Endothelial cell of umbilical vein (primary cell): ENCODE measurements at regions of chr3 and their contacts with region 1.

Region 1: GRCh38 chr3:31132132-31132769 is 237.8 kb upstream of the GADL1 start:
- DNase-seq: peak; percentile 63
- H3K4me3 ChIP-seq: no peak overlapping the region
- H3K27ac ChIP-seq: no peak overlapping the region
- H3K4me1 ChIP-seq: no peaks in the 10 kb centered on the region
- H3K27me3 ChIP-seq: no peaks in the 10 kb centered on the region
- CTCF ChIP-seq: peak; percentile 28 to 38
- POLR2A ChIP-seq: no peak

Region 2: DNA sequence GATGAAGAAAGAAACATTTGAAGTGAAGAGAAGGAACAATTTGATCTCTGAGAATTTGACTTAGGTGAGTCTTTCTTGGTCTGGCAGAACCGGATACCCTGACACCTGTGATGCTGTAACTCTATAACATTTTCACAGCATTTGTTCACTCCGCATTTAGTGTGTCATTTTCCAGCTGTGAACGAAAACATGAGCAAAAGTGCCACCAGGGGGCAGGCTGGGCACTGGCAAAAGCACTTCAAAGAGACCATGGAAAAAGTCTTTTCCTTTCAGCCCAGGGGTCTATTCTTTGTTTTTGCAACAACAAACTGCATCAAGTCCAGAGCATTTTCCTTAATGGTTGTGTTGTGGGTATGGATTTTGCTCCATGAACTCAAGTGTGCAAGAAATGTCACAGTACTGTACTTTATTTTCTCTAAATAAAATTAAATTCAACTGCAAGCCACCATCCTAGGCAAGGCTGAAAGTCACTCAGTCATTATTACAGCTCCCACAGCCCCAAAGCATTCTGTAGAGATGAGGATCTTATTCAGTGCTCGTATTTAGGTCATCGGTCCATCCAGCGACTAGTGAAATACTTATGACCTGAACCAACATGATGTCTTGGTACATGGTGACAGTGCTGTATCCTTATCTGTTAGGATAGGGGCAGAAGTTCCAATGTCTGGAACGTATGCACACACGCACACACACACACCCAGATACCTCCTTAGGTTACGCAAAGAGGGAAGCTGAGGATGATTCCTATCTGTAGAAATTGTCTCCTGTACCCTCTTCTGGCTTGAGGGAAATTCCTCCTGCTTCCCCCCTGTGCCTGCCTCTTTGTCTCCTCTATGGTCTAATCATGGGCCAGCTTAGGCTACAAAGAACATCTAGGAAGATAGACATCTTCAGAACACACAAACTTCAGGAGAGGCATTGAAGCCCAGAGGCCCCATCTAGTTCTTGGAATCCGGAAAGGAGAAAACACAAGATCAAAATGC is 363.3 kb before region 1 on chr3:
- CTCF ChIA-PET with region 1: interaction called, 125 read pairs
- POLR2A ChIA-PET with region 1: no interaction called
- dilution Hi-C with region 1: no loop called
- intact Hi-C with region 1: loop called (anchors 1 kb)
- DNase-seq: peak; percentile 70
- H3K4me3 ChIP-seq: no peak overlapping the region
- H3K27ac ChIP-seq: no peak overlapping the region
- H3K4me1 ChIP-seq: no peaks in the 10 kb centered on the region
- H3K27me3 ChIP-seq: peaks cover 0 to 3% of the 10 kb centered on the region in 2 experiments
- CTCF ChIP-seq: peak; percentile 80 to 85
- POLR2A ChIP-seq: no peak

Region 3: DNA sequence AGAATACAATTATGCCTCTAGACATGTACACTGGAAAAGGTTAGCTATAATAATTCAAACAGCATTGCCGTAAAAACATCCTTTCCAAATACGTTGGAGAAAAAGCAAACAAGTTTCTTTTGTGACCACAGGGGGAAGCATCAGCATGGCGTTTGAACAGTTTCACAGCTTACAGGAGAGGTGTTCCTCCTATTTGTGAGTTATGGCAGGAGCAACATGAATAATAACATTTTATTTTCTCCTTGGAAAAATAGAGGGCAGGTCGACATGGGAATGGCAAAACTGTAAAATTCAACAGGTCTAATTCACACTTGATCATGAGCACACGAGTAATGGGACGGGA is 198.1 kb before region 1 on chr3:
- CTCF ChIA-PET with region 1: interaction called, 28 read pairs
- POLR2A ChIA-PET with region 1: no interaction called
- dilution Hi-C with region 1: no loop called
- intact Hi-C with region 1: loop called (anchors 1 kb)
- DNase-seq: peak; percentile 48
- H3K4me3 ChIP-seq: no peak overlapping the region
- H3K27ac ChIP-seq: no peak overlapping the region
- H3K4me1 ChIP-seq: no peaks in the 10 kb centered on the region
- H3K27me3 ChIP-seq: peaks cover 0 to 1% of the 10 kb centered on the region in 2 experiments
- CTCF ChIP-seq: peak in 1 of 2 donors; percentile 31
- POLR2A ChIP-seq: no peak

Region 4: GRCh38 chr3:31050296-31050695 is 82.0 kb before region 1 on chr3:
- CTCF ChIA-PET with region 1: no interaction called
- POLR2A ChIA-PET with region 1: no interaction called
- dilution Hi-C with region 1: no loop called
- intact Hi-C with region 1: no loop called
- DNase-seq: no peak
- H3K4me3 ChIP-seq: no peak overlapping the region
- H3K27ac ChIP-seq: no peak overlapping the region
- H3K4me1 ChIP-seq: no peaks in the 10 kb centered on the region
- H3K27me3 ChIP-seq: peaks cover 3 to 13% of the 10 kb centered on the region in 2 experiments
- CTCF ChIP-seq: no peak
- POLR2A ChIP-seq: no peak

Region 5: GRCh38 chr3:31092748-31093551 is 39.3 kb before region 1 on chr3:
- CTCF ChIA-PET with region 1: interaction called, 4 read pairs
- POLR2A ChIA-PET with region 1: no interaction called
- dilution Hi-C with region 1: no loop called
- intact Hi-C with region 1: loop called (anchors 1 kb)
- DNase-seq: peak; percentile 59
- H3K4me3 ChIP-seq: no peak overlapping the region
- H3K27ac ChIP-seq: peak overlapping the region; percentile 53
- H3K4me1 ChIP-seq: peaks cover 13% of the 10 kb centered on the region
- H3K27me3 ChIP-seq: no peaks in the 10 kb centered on the region
- CTCF ChIP-seq: no peak
- POLR2A ChIP-seq: no peak

Region 6: GRCh38 chr3:31448035-31448881 is 316.0 kb after region 1 on chr3:
- CTCF ChIA-PET with region 1: interaction called, 3 read pairs
- POLR2A ChIA-PET with region 1: no interaction called
- dilution Hi-C with region 1: no loop called
- intact Hi-C with region 1: loop called (anchors 10 kb)
- DNase-seq: peak; percentile 26
- H3K4me3 ChIP-seq: no peak overlapping the region
- H3K27ac ChIP-seq: no peak overlapping the region
- H3K4me1 ChIP-seq: no peaks in the 10 kb centered on the region
- H3K27me3 ChIP-seq: no peaks in the 10 kb centered on the region
- CTCF ChIP-seq: peak; percentile 53 to 74
- POLR2A ChIP-seq: no peak